ENCODE measurements at regions of chr13 and their contacts with region 1.

Region 1: GRCh38 chr13:30465585-30466357 is at the start of gene HMGB1:
- DNase-seq: peak; percentile 99
- H3K4me3 ChIP-seq: peak within 1 kb of the TSS; percentile 89 to 98 (median 93)
- H3K27ac ChIP-seq: peak within 1 kb of the TSS; percentile 99
- H3K4me1 ChIP-seq: peaks cover 0 to 8% of the 10 kb centered on the region in 2 donors
- H3K27me3 ChIP-seq: no peaks in the 10 kb centered on the region
- CTCF ChIP-seq: no peak
- POLR2A ChIP-seq: peak; percentile 95
- total RNA-seq, gene HMGB1: 185 to 269 (median 262) TPM

Region 2: DNA sequence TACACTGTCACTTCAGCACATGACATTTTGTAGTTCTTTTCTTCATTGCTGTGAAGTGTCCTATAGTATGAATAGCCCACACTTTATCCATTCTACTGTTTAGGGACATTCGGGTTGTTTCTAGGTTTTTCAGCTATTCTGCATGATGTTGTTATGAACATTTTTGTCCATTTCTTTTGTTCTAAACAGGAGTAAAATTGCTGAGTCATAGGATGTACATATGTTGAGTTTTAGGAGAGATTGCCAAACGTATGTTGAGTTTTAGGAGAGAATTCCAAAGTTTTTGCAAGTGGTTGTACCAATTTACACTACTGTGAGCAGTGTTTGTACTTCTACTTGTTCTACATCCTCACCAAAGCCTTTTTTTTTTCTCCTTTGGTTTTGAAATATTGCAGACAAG is 1530.7 kb before region 1 on chr13:
- intact Hi-C with region 1: no loop called
- DNase-seq: no peak
- H3K4me3 ChIP-seq: no peak overlapping the region
- H3K27ac ChIP-seq: no peak overlapping the region
- H3K4me1 ChIP-seq: no peaks in the 10 kb centered on the region
- H3K27me3 ChIP-seq: no peaks in the 10 kb centered on the region
- CTCF ChIP-seq: no peak
- POLR2A ChIP-seq: no peak

Region 3: DNA sequence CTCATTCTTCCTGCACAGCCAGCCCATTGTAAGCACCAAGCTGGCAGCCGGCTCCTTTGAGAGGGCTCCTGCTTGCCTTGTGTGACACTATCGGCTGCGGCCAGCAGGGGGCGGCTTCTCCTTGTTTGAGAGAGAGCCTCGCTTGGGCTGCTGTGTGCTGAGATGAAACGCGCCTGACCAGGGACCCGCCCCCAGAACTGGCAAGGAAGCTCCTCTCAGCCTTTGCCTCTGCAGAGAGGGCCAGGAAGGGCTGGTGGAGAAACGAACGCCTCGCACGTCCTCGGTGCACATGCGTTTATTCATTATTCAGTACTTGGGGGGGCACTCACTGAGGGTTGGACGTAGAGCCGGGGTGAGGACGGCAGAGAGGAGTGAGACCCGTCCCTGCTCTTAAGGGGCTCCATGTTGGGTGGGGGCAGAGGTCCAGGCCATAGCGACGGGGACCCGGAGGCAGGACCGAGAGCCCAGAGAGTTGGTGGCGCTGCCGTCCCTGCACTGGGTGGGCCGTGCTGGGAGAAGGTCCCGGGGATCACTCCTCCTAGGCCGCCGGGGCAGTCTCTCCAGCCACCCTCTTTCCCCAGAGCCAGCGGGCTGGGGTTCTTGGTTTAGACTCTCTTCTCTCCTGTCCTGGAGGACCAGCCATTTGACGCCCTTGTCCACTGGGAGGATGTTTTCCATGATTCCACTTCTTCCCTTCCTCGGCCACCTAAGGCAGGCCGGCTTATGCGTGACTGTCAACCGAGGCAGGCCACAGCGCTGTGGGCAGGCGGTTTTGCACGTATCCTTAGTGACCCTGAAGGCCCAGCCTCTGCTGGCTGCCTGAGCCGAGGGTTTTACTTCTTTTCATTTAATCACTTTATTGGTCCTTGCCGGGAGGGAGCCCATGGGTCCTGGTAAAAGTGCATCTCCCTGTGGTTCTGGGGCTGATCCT is 332.9 kb before region 1 on chr13:
- intact Hi-C with region 1: loop called (anchors 10 kb)
- DNase-seq: peak; percentile 96 to 99
- H3K4me3 ChIP-seq: no peak overlapping the region
- H3K27ac ChIP-seq: peak overlapping the region; percentile 61 to 67
- H3K4me1 ChIP-seq: peaks cover 0 to 2% of the 10 kb centered on the region in 2 donors
- H3K27me3 ChIP-seq: no peaks in the 10 kb centered on the region
- CTCF ChIP-seq: peak; percentile 93 to 95 (median 95)
- POLR2A ChIP-seq: no peak

Region 4: DNA sequence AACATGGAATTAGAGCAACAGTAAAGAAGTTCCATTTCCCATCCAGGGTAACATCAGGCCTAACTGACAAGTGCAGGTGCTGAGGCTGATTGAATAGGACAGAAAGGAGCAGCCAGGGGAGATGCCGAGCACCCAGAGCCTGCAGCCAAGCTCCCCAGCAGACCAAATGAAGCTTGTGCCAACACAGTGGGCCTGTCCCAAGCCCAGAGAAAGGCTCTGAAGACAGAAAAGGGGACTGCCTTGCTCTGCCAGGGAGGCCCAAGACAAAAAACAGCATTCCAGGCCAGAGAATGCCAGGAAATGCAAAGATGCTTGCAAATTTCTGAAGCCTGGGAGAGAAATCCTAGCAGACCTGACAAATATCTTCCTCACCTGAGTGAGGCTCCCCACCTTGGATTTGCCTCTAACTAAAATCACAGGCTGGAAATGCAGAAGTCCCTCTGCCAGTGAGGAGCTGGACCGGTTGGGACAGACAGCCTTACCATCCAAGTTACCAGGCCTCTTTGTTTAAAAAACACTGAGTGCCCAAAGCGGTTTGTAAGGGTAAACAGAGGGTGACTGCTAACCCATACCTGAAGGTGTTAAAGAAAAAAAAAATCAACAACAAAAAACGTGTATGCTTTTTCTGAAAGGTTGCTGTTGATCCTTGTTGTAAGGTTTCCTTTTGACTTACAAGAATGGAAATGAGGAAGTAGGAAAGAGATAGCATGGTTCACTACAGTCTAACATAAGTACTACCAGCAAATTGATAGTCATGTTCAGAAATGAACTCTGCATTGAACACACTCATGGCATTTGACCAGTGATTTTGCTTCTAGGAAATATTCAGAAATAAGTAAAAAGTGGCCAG is 11.8 kb after region 1 on chr13:
- intact Hi-C with region 1: no loop called
- DNase-seq: no peak
- H3K4me3 ChIP-seq: no peak overlapping the region
- H3K27ac ChIP-seq: peak overlapping the region; percentile 32 to 41
- H3K4me1 ChIP-seq: no peaks in the 10 kb centered on the region
- H3K27me3 ChIP-seq: no peaks in the 10 kb centered on the region
- CTCF ChIP-seq: no peak
- POLR2A ChIP-seq: no peak

Region 5: GRCh38 chr13:30535046-30535445 is 69.3 kb after region 1 on chr13:
- intact Hi-C with region 1: no loop called
- DNase-seq: no peak
- H3K4me3 ChIP-seq: no peak overlapping the region
- H3K27ac ChIP-seq: no peak overlapping the region
- H3K4me1 ChIP-seq: no peaks in the 10 kb centered on the region
- H3K27me3 ChIP-seq: no peaks in the 10 kb centered on the region
- CTCF ChIP-seq: no peak
- POLR2A ChIP-seq: no peak

Region 6: GRCh38 chr13:30617315-30618185 is 151.8 kb after region 1 on chr13 and contains the start of gene USPL1:
- intact Hi-C with region 1: loop called (anchors 10 kb)
- DNase-seq: peak; percentile 98
- H3K4me3 ChIP-seq: peak within 1 kb of the TSS; percentile 74 to 86 (median 78)
- H3K27ac ChIP-seq: peak within 1 kb of the TSS; percentile 99 to 100
- H3K4me1 ChIP-seq: peaks cover 0 to 6% of the 10 kb centered on the region in 2 donors
- H3K27me3 ChIP-seq: no peaks in the 10 kb centered on the region
- CTCF ChIP-seq: peak; percentile 71 to 81 (median 74)
- POLR2A ChIP-seq: peak; percentile 97
- total RNA-seq, gene USPL1: 27.8 to 40.0 (median 28.2) TPM